ENCODE measurements at regions of chr3 and their contacts with region 1.

Region 1: DNA sequence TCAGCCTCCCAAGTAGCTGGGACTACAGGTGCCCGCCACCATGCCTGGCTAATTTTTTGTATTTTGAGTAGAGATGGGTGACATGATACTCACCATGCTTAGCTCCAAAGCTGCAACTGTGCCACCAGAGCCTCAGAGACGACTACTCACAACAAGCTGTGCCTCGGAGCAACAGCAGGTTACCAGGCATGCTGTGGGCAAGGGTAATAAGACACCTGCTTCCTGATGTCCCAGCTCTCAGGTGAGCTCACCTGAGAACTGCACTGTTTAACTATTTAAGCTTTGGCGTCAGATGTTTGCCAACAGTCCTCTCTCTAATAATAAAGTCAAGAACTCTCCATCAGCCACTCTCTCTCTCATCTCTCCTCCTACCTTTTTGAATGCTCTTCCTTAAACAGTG is 7.3 kb downstream of the DZIP1L start:
- DNase-seq: no peak
- H3K4me3 ChIP-seq: no peak overlapping the region
- H3K27ac ChIP-seq: no peak overlapping the region
- H3K4me1 ChIP-seq: peaks cover 0 to 7% (median 0%) of the 10 kb centered on the region in 4 experiments; a peak in 1 of 7 replicates
- H3K27me3 ChIP-seq: no peaks in the 10 kb centered on the region
- CTCF ChIP-seq: no peak
- EP300 ChIP-seq: no peak
- POLR2A ChIP-seq: no peak
- RAD21 ChIP-seq: no peak

Region 2: DNA sequence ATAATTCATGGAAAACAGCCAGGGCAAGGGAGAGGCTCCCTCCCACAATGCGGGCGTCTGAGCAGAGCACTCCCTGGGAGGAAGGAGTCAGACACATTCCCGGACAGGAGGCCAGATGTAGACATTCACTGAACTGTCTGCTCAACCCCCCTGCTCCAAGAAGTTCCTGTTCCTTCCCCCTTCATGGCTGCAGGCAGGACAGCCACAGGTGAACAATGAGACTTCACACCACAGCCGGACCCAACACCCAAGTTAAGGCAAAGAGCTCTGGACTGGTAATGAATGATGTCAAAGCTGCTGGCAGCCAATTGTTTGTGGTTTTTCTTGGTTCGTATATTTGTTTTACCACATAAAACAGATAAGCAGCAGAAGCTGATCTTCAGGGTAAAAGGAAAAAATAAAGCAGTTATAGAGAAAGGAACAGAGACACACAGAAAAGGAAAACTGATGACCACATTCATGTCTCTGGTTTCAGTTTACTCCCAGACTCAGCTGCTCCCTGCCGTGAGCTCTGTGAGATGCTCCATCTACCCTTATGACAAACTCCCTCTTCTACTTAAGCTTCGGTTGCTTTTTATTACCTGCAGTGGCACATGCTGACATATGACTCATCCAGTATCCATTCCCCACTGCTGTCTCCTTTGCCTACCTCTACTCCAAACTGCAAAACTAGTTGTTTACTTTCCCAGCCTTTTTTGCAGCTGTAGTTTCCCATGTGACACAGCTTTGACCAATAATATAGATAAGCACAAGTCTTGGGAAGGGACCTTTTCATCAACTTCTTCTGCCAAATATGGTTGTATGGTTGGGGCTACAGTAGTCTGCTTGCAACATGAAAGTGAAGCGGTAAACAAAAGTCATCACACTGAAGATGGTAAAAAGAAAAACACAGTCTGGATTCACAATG is 25.8 kb before region 1 on chr3:
- CTCF ChIA-PET with region 1: interaction called, 15 read pairs
- POLR2A ChIA-PET with region 1: no interaction called
- DNase-seq: no peak
- H3K4me3 ChIP-seq: no peak overlapping the region
- H3K27ac ChIP-seq: no peak overlapping the region
- H3K4me1 ChIP-seq: no peaks in the 10 kb centered on the region
- H3K27me3 ChIP-seq: no peaks in the 10 kb centered on the region
- CTCF ChIP-seq: no peak
- EP300 ChIP-seq: no peak
- POLR2A ChIP-seq: no peak
- RAD21 ChIP-seq: no peak